Activated CD4-positive, alpha-beta T cell treated with anti-CD3 and anti-CD28 coated beads for 36 hours (primary cell): ENCODE measurements at regions of chrX and their contacts with region 1.

Region 1: DNA sequence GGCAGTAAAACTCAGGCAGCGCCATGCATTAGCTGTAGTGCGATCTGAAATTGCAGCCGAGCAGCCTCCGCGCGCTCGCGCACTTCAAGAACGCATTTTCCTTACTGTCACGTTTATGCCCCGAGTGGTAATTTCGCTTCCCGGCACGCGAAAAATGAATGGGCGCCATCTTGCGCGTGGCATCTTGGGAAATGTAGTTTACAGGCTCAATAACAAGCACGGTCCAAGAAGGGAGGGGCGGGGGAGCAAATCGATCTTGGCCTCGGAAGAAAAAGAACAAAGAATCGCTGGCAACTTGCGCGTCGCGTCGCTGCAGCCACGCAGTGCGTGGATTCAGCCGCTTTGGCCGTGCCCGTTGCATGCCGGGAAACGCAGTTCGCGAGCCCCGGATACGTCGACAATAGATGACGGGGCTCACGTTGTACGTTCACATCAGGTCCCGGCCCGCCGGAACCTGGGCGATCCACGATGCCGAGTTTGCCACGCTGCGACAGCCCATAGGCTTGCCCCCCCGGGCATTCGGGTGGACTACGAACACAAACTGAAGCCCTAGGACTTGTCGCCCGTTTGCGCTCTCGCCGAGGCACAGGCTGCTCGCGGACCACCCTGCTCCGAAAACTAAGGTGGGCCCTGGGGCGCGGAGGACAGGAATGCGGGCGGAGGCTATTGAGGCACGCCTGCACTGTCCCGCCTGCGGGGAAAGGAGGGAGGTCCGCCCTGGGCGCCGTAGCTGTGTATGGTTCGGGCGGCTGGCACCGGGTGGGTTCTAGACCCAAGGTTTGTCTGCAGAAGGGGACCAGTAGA is at the start of gene FTSJ1:
- DNase-seq: peak; percentile 88
- ATAC-seq: peak; percentile 91
- H3K4me3 Mint-ChIP-seq: peak within 1 kb of the TSS; percentile 93
- H3K27ac Mint-ChIP-seq: peak within 1 kb of the TSS; percentile 90
- H3K4me1 Mint-ChIP-seq: peaks cover 36% of the 10 kb centered on the region
- H3K27me3 Mint-ChIP-seq: no peaks in the 10 kb centered on the region
- total RNA-seq, gene FTSJ1: 73.0 to 93.7 TPM

Region 2: DNA sequence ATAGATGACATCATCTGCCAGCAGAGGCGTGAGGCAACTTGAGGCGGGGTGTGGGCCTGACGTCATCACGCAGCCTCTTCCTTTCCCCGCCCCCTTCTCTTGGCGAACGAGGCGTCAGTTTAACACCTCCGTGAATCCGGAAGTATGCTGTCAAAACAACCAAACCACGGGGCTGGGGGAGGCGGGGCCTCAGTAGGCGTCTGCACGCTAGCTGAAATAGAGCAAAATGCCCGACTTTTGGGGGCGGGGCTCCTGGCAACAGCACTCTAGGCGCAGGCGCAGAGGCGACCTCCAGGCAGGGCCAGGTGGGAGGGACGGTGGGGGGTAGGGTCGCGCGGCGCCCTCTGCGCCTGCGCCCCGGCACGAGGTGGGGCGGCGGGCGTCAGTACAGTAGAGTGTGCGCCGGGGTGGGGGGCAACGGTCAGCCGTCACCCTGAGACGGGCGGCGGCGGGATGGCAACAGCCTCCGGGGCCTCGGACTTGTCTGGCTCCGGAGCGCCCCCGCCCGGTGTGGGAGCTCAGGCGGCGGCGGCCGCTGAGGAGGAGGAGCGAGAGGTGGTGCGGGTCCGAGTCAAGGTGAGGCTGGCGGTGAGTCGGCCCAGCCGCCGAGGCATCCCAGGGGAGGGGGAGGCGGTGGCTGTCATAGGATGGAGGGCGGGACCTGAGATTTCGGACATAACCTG is 63.5 kb after region 1 on chrX and contains the start of gene TBC1D25:
- CTCF ChIA-PET with region 1: no interaction called
- POLR2A ChIA-PET with region 1: no interaction called
- intact Hi-C with region 1: loop called (anchors 1 to 5 kb)
- DNase-seq: peak; percentile 98
- ATAC-seq: peak; percentile 80
- H3K4me3 Mint-ChIP-seq: peak within 1 kb of the TSS; percentile 87
- H3K27ac Mint-ChIP-seq: peak within 1 kb of the TSS; percentile 89
- H3K4me1 Mint-ChIP-seq: peaks cover 15% of the 10 kb centered on the region
- H3K27me3 Mint-ChIP-seq: no peaks in the 10 kb centered on the region
- total RNA-seq, gene TBC1D25: 13.2 to 15.2 TPM

Region 3: DNA sequence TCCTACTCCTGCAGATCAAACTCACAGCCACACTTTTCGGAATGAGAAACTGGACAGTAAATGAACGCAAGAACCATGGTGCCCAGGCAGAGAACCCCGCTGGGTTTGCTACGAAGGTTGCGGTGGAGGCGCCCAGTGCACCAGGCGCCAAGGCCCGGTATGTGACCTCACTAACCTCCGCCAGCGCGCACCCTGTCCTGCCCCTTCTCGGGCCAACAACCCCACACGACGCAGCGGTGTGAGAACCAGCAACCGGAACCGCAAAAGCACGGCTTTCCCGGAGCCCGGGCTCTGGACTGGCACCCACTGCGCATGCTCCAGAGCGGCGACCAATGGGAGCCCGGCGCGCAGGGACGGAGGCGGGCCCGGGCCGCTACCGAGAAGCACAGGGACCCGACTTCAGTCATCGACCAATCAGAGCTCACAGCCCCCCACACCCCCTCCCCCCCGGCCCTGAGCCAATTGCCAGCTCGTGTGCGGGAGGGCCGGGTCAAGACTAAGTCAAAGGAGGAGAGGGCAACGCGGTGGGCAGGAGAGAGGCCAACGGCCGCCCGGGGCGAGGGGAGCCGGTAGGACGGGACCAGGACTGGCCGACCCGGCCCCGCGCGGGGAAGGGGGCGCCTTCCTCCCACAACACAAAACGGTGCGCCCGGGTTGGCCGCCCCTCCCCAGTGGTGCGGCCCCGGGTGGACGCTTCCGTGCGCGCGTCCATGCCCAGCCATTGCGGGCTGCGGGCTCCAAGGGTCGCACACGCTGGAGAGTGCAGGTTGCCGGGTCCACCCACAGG is 200.3 kb after region 1 on chrX:
- CTCF ChIA-PET with region 1: no interaction called
- POLR2A ChIA-PET with region 1: no interaction called
- intact Hi-C with region 1: loop called in 1 of 2 experiments (anchors 1 kb)
- DNase-seq: peak; percentile 92
- ATAC-seq: peak; percentile 95
- H3K4me3 Mint-ChIP-seq: peak overlapping the region; percentile 90
- H3K27ac Mint-ChIP-seq: peak overlapping the region; percentile 91
- H3K4me1 Mint-ChIP-seq: peaks cover 19% of the 10 kb centered on the region
- H3K27me3 Mint-ChIP-seq: no peaks in the 10 kb centered on the region